ENCODE measurements at regions of chr6 and their contacts with region 1.

Region 1: DNA sequence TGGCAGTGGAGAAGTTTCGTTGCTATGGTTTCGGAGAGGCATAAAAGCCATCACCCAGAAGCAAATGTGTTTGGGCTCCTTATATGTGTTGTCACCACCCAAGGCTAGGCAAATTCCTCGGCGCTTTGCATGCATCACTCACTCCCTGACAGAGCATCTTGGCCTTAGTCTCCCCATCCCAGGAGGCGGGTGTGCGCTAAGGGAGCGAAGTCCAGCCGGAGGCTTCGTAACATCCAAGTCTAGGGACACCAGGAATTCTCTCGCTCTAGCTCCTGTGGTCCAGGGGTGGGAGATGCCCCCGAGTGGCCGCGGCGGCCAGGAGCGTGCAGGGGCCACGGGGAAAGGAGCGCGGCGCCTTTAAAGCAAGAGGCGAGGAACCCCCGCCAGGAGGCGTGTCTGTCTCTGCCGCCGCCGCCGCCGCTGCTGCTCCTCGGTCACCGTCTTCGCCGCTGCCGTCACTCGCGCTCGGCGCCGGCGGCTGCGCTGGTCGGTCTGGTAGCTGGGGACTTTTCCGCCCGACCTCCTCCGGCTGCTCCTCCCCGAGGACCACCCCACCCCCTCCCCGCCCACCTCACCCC is at the start of gene GRIK2:
- DNase-seq: peak in 3 of 5 donors; percentile 36 to 58 (median 52)
- ATAC-seq: peak in 3 of 4 donors; percentile 78 to 92 (median 78)
- H3K4me3 ChIP-seq: peak within 1 kb of the TSS; percentile 36 to 56 (median 48)
- H3K27ac ChIP-seq: peak within 1 kb of the TSS in 1 of 12 donors; percentile 12
- H3K4me1 ChIP-seq: peaks cover 0 to 21% (median 1%) of the 10 kb centered on the region in 12 donors
- H3K27me3 ChIP-seq: peaks cover 8 to 62% (median 32%) of the 10 kb centered on the region in 9 donors
- CTCF ChIP-seq: peak in 11 of 12 donors; percentile 9 to 48 (median 26)
- POLR2A ChIP-seq: no peak
- total RNA-seq, gene GRIK2: 1.2 to 7.0 (median 5.1) TPM

Region 2: DNA sequence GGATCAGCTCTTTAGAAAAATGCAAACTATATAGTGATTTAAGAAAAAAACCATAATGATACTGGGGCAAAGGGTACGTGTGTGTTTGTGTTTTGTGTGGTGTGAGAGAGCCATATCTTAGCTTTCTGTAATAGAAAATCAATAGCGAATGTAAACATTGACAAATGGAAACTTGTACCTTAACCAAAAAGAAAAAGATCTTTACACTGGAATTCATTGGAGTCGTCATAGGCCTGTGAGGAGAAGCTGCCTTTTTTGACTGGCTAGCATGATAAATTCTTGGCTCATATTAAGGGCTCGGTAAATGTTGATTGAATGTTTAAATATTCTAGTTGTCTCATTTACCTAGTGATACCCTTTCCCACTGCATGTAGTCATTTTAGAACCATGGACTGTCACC is 350.4 kb before region 1 on chr6:
- intact Hi-C with region 1: no loop called
- DNase-seq: no peak
- ATAC-seq: no peak
- H3K4me3 ChIP-seq: no peak overlapping the region
- H3K27ac ChIP-seq: no peak overlapping the region
- H3K4me1 ChIP-seq: no peaks in the 10 kb centered on the region
- H3K27me3 ChIP-seq: no peaks in the 10 kb centered on the region
- CTCF ChIP-seq: no peak
- POLR2A ChIP-seq: no peak

Region 3: DNA sequence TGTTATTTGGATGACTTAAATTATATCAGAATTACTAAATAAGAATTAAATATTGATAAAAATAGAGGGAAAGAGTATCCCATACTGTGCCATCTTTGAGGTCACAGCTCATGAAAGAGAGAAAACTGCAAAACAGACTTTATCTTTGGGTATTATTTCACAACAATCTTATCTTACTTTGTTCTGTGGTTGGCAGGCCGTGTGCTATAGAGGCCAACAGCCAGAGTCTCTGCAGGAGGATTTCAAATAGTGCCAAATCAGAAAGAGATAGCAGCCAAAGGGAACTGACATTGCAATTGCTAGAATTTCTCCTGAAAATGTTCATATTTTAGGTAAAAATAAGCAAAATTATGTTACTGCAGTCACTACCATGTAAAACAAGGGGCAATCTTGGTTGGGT is 354.4 kb after region 1 on chr6:
- intact Hi-C with region 1: loop called in 1 of 10 experiments (anchors 10 kb)
- DNase-seq: peak in 1 of 5 donors; percentile 31
- ATAC-seq: peak; percentile 75 to 92 (median 82)
- H3K4me3 ChIP-seq: no peak overlapping the region
- H3K27ac ChIP-seq: peak overlapping the region in 5 of 12 donors; percentile 1 to 27 (median 21)
- H3K4me1 ChIP-seq: peaks cover 0 to 4% (median 0%) of the 10 kb centered on the region in 12 donors
- H3K27me3 ChIP-seq: no peaks in the 10 kb centered on the region
- CTCF ChIP-seq: no peak
- POLR2A ChIP-seq: no peak

Measured in heart left ventricle (tissue), 16 donors.